K562 (cell line): ENCODE measurements at regions of chr14 and their contacts with region 1.

Region 1: GRCh38 chr14:73785873-73786695 is 65.5 kb upstream of the PTGR2 start:
- DNase-seq: peak; percentile 46 to 77 (median 50)
- ATAC-seq: peak; percentile 85
- H3K4me3 ChIP-seq: peak overlapping the region; percentile 70
- H3K27ac ChIP-seq: peak overlapping the region; percentile 97
- H3K4me1 ChIP-seq: peaks cover 43 to 49% of the 10 kb centered on the region in 2 experiments
- H3K27me3 ChIP-seq: no peaks in the 10 kb centered on the region
- CTCF ChIP-seq: peak in 1 of 3 experiments; percentile 17; a peak in 1 of 6 replicates
- EP300 ChIP-seq: peak; percentile 63
- POLR2A ChIP-seq: peak; percentile 63
- RAD21 ChIP-seq: no peak; a peak in 1 of 4 replicates

Region 2: DNA sequence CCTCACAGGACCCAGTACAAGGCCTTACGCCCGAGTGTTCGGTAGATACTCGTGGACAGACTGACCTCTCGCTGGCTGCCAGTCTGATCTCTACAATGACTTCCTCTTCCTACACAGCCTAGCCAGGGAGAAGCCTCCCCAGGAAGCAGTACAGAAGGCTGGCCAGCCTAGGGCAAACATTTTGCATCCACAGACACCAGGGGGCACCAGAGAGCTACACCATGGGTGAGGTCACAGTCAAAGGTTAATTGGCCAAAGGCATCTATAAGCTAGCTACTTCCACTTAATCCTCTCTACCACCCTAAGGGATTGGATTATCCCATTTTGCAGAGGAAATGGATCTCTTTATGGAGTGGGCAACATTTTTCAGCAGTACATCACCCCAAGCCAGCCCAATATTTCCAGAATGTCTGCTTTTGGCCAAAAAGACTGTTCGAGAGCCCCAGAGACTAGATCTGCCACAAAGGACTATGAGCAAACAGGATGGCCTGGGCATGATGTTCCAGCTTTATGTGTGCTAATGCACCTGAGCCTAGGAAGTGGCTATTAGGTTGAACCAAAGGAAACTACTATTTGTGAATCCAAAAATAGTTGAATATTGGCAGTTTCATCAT is 57.3 kb before region 1 on chr14:
- CTCF ChIA-PET with region 1: no interaction called
- POLR2A ChIA-PET with region 1: interaction called, 5 read pairs
- in situ Hi-C with region 1: no loop called
- intact Hi-C with region 1: loop called (anchors 2 kb)
- DNase-seq: peak; percentile 75 to 89 (median 78)
- ATAC-seq: peak; percentile 79
- H3K4me3 ChIP-seq: no peak overlapping the region
- H3K27ac ChIP-seq: peak overlapping the region; percentile 67
- H3K4me1 ChIP-seq: peaks cover 41% of the 10 kb centered on the region in 2 experiments
- H3K27me3 ChIP-seq: no peaks in the 10 kb centered on the region
- CTCF ChIP-seq: peak; percentile 83 to 89 (median 85)
- EP300 ChIP-seq: no peak
- POLR2A ChIP-seq: no peak
- RAD21 ChIP-seq: peak; percentile 86 to 92

Region 3: DNA sequence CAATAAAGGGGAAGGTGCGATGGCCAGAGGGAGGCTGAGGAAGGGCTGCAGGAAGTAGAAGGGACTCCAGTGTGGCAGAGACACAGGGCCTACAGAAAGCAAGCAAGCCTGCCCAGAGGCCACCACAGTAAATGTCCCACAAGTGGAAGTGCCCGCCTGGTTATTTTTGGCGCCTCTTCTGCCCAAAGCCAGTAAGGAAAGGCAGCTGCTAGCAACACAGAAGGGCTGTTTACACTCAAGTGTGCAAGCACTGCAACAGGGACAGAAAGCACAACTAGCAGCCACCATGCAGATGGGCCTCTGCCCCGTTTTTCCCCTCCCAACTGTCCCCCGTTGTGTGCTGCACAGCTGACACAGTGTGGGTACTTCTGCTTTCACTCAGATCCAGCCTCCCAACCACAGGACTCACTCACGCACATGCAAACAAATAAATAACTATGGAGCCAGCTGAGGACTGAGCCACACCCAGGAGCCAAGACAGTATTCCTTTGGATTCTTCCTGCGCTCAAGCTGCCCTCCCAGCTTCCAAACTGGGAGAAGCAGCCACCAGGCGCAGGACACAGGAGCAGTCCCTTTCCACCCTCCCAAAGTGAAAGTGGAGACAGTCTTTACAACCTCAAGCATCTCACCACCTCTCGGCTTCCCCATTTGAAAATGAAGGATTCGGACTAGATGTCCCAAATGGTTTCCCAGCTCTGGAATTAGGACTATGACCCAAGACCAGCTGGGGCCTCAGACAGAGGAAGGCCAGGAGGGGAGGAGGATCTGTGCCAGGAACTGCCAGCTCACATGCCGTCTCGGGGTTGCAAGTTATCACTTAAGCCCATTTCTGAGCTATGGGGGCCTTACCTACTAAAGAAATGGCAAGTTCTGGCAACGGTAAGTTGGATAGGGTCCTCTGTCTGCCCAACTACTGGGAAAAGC is 31.9 kb before region 1 on chr14:
- CTCF ChIA-PET with region 1: no interaction called
- POLR2A ChIA-PET with region 1: interaction called, 31 read pairs
- in situ Hi-C with region 1: no loop called
- intact Hi-C with region 1: loop called (anchors 5 kb)
- DNase-seq: no peak
- ATAC-seq: peak; percentile 2
- H3K4me3 ChIP-seq: peak overlapping the region; percentile 33
- H3K27ac ChIP-seq: peak overlapping the region; percentile 84
- H3K4me1 ChIP-seq: peaks cover 74 to 76% of the 10 kb centered on the region in 2 experiments
- H3K27me3 ChIP-seq: no peaks in the 10 kb centered on the region
- CTCF ChIP-seq: no peak
- EP300 ChIP-seq: no peak
- POLR2A ChIP-seq: no peak
- RAD21 ChIP-seq: peak in 1 of 2 experiments; percentile 2; a peak in 1 of 4 replicates

Region 4: DNA sequence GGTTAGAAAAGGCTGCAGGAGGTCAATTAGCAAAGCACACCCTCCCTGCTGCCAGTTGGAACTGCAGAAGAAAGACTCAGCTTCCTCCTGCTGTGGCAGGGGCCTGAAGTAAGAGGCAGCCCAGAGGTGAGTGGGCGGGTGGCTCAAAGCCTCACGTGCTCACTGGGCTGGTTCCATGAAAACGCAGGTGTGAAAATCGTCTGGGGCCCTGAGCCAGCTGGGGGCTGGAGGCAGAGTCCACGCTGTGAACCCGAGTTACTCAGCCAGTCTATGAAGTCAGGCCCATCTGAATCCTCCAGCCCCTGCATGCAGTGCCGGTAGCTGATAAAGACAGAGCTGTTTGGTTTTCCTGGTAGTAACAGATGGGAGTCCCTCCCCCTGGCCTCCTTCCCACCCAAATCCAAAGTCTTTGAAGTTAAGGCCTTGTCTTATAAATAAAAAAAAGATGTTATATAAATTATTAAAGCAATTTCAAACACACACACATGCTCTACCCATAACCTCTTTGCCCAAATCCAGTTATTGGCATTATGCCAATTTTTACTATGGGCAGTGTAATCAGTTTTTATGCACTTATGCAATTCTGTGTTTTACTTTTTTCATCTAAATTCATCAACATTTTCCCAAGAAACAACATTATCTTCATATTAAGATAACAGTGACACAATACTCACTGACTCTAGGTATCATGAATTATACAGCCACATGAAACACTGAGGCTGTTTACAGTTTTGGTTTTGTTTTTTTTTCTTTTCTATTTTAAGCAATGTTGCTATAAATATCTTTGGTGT is 14.0 kb before region 1 on chr14:
- CTCF ChIA-PET with region 1: no interaction called
- POLR2A ChIA-PET with region 1: interaction called, 41 read pairs
- in situ Hi-C with region 1: no loop called
- intact Hi-C with region 1: no loop called
- DNase-seq: peak; percentile 81 to 94 (median 86)
- ATAC-seq: peak; percentile 91
- H3K4me3 ChIP-seq: no peak overlapping the region
- H3K27ac ChIP-seq: peak overlapping the region; percentile 76
- H3K4me1 ChIP-seq: peaks cover 38 to 45% of the 10 kb centered on the region in 2 experiments
- H3K27me3 ChIP-seq: no peaks in the 10 kb centered on the region
- CTCF ChIP-seq: no peak
- EP300 ChIP-seq: peak; percentile 83
- POLR2A ChIP-seq: no peak
- RAD21 ChIP-seq: peak in 1 of 2 experiments; percentile 2; a peak in 1 of 4 replicates

Region 5: GRCh38 chr14:73796893-73797542 is 10.9 kb after region 1 on chr14:
- CTCF ChIA-PET with region 1: no interaction called
- POLR2A ChIA-PET with region 1: interaction called, 13 read pairs
- in situ Hi-C with region 1: no loop called
- intact Hi-C with region 1: no loop called
- DNase-seq: no peak
- ATAC-seq: no peak
- H3K4me3 ChIP-seq: no peak overlapping the region
- H3K27ac ChIP-seq: no peak overlapping the region
- H3K4me1 ChIP-seq: peaks cover 0 to 3% of the 10 kb centered on the region in 2 experiments; a peak in 3 of 5 replicates
- H3K27me3 ChIP-seq: no peaks in the 10 kb centered on the region
- CTCF ChIP-seq: no peak
- EP300 ChIP-seq: no peak
- POLR2A ChIP-seq: no peak
- RAD21 ChIP-seq: no peak